WTC11 (cell line): ENCODE measurements at regions of chr7 and their contacts with region 1.

Region 1: GRCh38 chr7:83475420-83475819 is 173.5 kb downstream of the SEMA3E start:
- DNase-seq: peak; percentile 75
- ATAC-seq: peak; percentile 97
- H3K4me3 Mint-ChIP-seq: no peak overlapping the region
- H3K27ac Mint-ChIP-seq: no peak overlapping the region
- H3K4me1 Mint-ChIP-seq: peaks cover 31% of the 10 kb centered on the region
- H3K27me3 Mint-ChIP-seq: peaks cover 3% of the 10 kb centered on the region; the same call in 1 of the 2 replicates
- CTCF ChIP-seq: peak; percentile 43

Region 2: GRCh38 chr7:83410989-83411591 is 64.3 kb before region 1 on chr7:
- CTCF ChIA-PET with region 1: interaction called, 45 read pairs
- POLR2A ChIA-PET with region 1: no interaction called
- DNase-seq: no peak
- ATAC-seq: no peak
- H3K4me3 Mint-ChIP-seq: no peak overlapping the region
- H3K27ac Mint-ChIP-seq: no peak overlapping the region; the same call in 1 of the 2 replicates
- H3K4me1 Mint-ChIP-seq: peaks cover 34% of the 10 kb centered on the region
- H3K27me3 Mint-ChIP-seq: no peaks in the 10 kb centered on the region
- CTCF ChIP-seq: peak; percentile 68; the same call in 1 of the 2 replicates

Region 3: GRCh38 chr7:83486957-83487356 is 11.5 kb after region 1 on chr7:
- CTCF ChIA-PET with region 1: interaction called, 18 read pairs
- POLR2A ChIA-PET with region 1: no interaction called
- DNase-seq: no peak
- ATAC-seq: no peak
- H3K4me3 Mint-ChIP-seq: no peak overlapping the region
- H3K27ac Mint-ChIP-seq: no peak overlapping the region
- H3K4me1 Mint-ChIP-seq: no peaks in the 10 kb centered on the region
- H3K27me3 Mint-ChIP-seq: no peaks in the 10 kb centered on the region
- CTCF ChIP-seq: no peak

Region 4: DNA sequence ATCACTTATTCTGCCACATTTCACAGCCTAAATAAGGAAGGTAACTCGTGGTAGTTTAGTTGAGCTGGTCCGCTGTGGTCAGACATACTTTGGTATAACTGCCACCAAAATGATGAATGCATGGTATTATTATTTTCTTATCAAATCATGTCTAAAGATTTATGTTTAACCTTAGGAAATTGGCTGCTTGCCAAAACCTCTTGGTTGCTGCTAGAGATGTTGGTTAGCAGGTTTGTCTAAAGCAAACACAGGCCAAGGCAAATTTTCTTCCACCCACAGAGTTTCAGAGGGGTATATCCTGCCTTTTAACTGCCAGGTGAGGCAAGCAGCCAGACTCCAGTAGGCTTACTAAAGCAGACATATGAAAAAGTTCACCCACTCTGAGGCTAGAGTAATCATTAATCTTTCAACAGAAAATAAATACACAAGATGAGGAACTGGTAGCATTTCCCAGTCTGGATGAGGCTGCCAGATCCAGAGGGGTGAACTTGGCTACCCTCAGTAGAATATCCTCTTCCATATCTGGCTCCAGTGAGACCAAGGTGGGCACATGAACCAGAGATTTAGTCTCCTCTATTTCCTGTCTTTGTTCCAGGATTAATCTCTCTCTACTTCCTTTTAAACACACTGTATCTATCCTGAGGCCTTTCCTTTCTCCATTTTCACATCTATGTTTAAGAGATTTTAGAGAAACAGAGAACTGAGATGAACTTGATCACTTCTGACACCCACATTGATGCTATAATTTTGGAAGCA is 72.3 kb after region 1 on chr7:
- CTCF ChIA-PET with region 1: no interaction called
- POLR2A ChIA-PET with region 1: no interaction called
- DNase-seq: no peak
- ATAC-seq: no peak
- H3K4me3 Mint-ChIP-seq: no peak overlapping the region
- H3K27ac Mint-ChIP-seq: no peak overlapping the region
- H3K4me1 Mint-ChIP-seq: no peaks in the 10 kb centered on the region
- H3K27me3 Mint-ChIP-seq: no peaks in the 10 kb centered on the region
- CTCF ChIP-seq: no peak